ENCODE measurements at regions of chr6 and their contacts with region 1.

Region 1: DNA sequence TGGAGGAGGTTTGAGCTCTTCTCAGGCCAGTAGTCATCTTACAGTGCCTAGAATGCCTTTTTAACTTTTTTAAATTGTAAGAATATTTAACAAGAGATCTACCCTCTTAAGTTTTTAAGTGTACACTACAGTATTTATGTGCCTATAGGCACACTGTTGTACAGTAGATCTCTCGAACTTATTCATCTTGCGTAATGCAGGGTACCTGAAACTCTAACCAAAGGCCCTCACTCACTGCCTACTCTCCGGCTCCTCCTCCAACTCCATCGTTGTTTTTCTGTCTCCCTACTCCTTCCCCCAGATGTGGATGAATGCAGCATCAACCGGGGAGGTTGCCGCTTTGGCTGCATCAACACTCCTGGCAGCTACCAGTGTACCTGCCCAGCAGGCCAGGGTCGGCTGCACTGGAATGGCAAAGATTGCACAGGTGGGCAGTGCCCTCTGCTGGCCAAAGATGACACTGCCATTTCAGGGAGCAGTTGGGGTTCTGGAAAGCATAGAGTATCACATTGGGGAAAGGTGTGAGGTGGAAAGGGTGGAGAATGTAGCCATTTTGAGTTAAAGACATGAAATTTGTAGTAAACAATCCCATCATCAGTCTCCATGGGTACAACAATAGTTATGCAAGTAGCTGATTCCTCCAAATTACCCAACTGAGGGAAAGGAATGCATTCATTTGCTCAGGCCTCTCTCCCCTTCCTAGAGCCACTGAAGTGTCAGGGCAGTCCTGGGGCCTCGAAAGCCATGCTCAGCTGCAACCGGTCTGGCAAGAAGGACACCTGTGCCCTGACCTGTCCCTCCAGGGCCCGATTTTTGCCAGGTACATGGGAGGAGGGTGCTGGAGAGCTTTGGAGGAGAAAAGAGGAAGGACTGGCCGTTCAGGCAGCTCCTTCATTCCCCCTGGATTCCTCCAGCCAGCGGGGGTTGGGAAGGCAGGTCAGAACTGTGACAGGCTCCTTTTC is 18.4 kb upstream of the ZNF76 start:
- DNase-seq: peak; percentile 48 to 80
- ATAC-seq: peak; percentile 91 to 92
- H3K4me3 ChIP-seq: no peak overlapping the region
- H3K27ac ChIP-seq: no peak overlapping the region
- H3K4me1 ChIP-seq: no peaks in the 10 kb centered on the region
- CTCF ChIP-seq: peak; percentile 80
- EP300 ChIP-seq: no peak
- POLR2A ChIP-seq: no peak
- RAD21 ChIP-seq: peak; percentile 83 to 84

Region 2: GRCh38 chr6:34986845-34987246 is 254.3 kb before region 1 on chr6:
- CTCF ChIA-PET with region 1: interaction called, 15 read pairs
- POLR2A ChIA-PET with region 1: no interaction called
- DNase-seq: peak; percentile 61 to 63
- ATAC-seq: peak in 1 of 2 experiments; percentile 79; a peak in 4 of 6 replicates
- H3K4me3 ChIP-seq: no peak overlapping the region
- H3K27ac ChIP-seq: no peak overlapping the region
- H3K4me1 ChIP-seq: peaks cover 4% of the 10 kb centered on the region
- CTCF ChIP-seq: peak; percentile 65
- EP300 ChIP-seq: no peak
- POLR2A ChIP-seq: no peak
- RAD21 ChIP-seq: peak; percentile 68 to 78

Region 3: GRCh38 chr6:35146453-35146852 is 94.7 kb before region 1 on chr6:
- CTCF ChIA-PET with region 1: interaction called, 107 read pairs
- POLR2A ChIA-PET with region 1: no interaction called
- DNase-seq: peak; percentile 35 to 42
- ATAC-seq: peak; percentile 85 to 94; a peak in 4 of 6 replicates
- H3K4me3 ChIP-seq: no peak overlapping the region
- H3K27ac ChIP-seq: no peak overlapping the region
- H3K4me1 ChIP-seq: peaks cover 14% of the 10 kb centered on the region
- CTCF ChIP-seq: peak; percentile 67
- EP300 ChIP-seq: no peak
- POLR2A ChIP-seq: no peak
- RAD21 ChIP-seq: peak; percentile 84 to 89

Region 4: GRCh38 chr6:35161776-35162607 is 79.1 kb before region 1 on chr6:
- CTCF ChIA-PET with region 1: interaction called, 12 read pairs
- POLR2A ChIA-PET with region 1: no interaction called
- DNase-seq: no peak
- ATAC-seq: no peak
- H3K4me3 ChIP-seq: no peak overlapping the region
- H3K27ac ChIP-seq: no peak overlapping the region
- H3K4me1 ChIP-seq: peaks cover 17% of the 10 kb centered on the region
- CTCF ChIP-seq: no peak
- EP300 ChIP-seq: no peak
- POLR2A ChIP-seq: no peak
- RAD21 ChIP-seq: no peak

Region 5: DNA sequence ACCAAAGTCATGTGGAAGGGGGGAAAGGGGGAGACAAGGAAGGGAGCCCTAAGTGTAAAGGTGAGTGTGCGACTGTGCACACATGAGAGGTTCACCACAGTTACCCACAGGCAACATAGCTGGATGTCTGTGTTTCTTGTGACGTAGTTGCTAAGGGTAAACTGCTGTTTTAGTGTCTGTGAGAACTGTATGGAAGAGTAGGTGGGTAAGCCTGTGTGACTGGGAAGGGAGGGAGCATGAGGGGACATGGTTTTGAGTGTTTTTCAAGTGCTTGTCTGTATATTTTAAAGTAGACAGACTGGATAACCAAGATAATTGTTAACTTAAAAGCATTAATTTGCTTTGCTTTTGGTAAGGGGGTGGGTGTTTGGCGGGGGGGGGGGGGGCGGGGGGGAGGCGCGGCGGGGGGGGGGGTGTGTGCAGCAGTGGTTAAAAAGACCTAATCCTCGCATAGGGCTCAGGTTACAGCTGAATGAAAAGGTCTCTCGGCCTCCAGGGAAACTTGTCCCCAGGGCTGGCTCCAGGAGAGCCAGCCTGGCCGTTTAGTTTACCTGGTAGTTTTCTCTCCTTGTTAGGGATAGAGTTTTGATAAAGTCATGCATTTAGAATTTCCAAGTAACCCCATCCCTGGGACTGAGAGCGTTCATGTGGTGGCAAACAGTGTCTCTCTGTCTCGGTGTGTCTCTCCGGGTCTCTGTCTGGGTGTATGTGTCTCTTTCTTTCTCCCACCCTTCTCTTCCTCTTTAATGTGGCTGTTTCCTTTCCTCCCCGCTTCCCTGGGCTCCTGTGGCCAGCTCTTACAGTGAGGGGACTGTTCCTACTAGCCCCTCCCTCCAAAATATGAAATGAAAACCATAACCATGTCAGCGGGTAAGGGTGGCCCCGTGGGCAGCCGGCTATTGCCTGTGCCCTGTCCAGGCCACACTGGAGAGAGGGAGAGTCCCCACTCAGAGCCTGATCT is 24.0 kb before region 1 on chr6:
- CTCF ChIA-PET with region 1: interaction called, 12 read pairs
- POLR2A ChIA-PET with region 1: no interaction called
- DNase-seq: no peak
- ATAC-seq: no peak
- H3K4me3 ChIP-seq: no peak overlapping the region
- H3K27ac ChIP-seq: no peak overlapping the region
- H3K4me1 ChIP-seq: no peaks in the 10 kb centered on the region
- CTCF ChIP-seq: no peak
- EP300 ChIP-seq: no peak
- POLR2A ChIP-seq: no peak
- RAD21 ChIP-seq: no peak

Region 6: GRCh38 chr6:35230950-35231349 is 10.2 kb before region 1 on chr6:
- CTCF ChIA-PET with region 1: interaction called, 60 read pairs
- POLR2A ChIA-PET with region 1: no interaction called
- DNase-seq: no peak
- ATAC-seq: no peak
- H3K4me3 ChIP-seq: no peak overlapping the region
- H3K27ac ChIP-seq: no peak overlapping the region
- H3K4me1 ChIP-seq: no peaks in the 10 kb centered on the region
- CTCF ChIP-seq: no peak
- EP300 ChIP-seq: no peak
- POLR2A ChIP-seq: no peak
- RAD21 ChIP-seq: no peak

Region 7: GRCh38 chr6:35562053-35562452 is 320.9 kb after region 1 on chr6:
- CTCF ChIA-PET with region 1: no interaction called
- POLR2A ChIA-PET with region 1: no interaction called
- DNase-seq: no peak
- ATAC-seq: no peak
- H3K4me3 ChIP-seq: no peak overlapping the region
- H3K27ac ChIP-seq: no peak overlapping the region
- H3K4me1 ChIP-seq: no peaks in the 10 kb centered on the region
- CTCF ChIP-seq: no peak
- EP300 ChIP-seq: no peak
- POLR2A ChIP-seq: no peak
- RAD21 ChIP-seq: no peak